Activated T-helper 2 cell treated with anti-CD3 and anti-CD28 coated beads, Interferon-gamma antibody, Interleukin-2, Interleukin-4, amounts not matched to agents 10 μg/mL and 5 μg/mL and 100 μg/mL, durations not matched to agents 14 hours and 24 hours and 36 hours (primary cell): ENCODE measurements at regions of chr22 and their contacts with region 1.

Region 1: GRCh38 chr22:46122511-46122971 is 27.8 kb upstream of the PPARA start:
- DNase-seq: peak; percentile 49
- H3K4me3 Mint-ChIP-seq: no peak overlapping the region
- H3K27ac Mint-ChIP-seq: no peak overlapping the region
- H3K4me1 Mint-ChIP-seq: no peaks in the 10 kb centered on the region
- H3K27me3 Mint-ChIP-seq: no peaks in the 10 kb centered on the region

Region 2: DNA sequence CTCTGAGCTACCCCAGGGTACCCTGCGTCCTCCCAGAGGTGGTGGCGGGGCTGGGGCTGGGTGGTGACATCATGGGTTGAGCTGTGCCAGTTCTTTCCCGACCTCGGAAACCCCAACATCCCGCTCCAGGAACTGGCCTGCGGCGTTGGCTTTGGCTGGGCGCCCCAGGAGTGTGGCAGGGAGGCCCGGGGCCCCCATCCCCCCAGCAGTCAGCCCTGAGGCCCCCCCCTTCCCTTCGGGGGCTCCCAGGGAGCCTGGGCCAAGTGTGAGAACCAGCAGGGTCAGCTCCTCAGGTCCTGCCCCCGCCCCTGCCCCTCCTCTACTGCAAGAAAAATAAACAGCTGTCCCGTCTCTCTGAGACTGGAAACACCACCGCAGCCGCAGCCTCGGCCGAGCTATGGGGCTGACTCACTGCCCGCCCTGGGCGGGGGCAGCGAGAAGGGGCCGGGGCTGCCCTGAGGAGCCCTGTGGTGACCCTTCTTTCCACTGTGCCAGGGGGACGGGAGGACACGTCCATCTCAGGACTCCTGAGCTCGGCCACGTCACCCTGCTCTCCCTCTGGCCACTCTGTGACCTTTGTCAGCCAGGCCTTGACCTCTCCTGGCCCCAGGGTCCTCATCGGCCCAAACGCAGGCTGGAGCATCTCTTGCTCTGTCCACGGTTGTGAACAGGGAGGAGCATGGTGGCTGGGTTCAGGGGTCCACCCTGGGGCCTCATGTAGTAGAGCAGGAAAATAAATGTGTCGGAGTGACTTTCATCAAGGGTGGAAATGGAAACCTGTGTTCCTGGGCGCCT is 219.0 kb before region 1 on chr22:
- intact Hi-C with region 1: no loop called
- DNase-seq: no peak
- H3K4me3 Mint-ChIP-seq: no peak overlapping the region
- H3K27ac Mint-ChIP-seq: no peak overlapping the region
- H3K4me1 Mint-ChIP-seq: no peaks in the 10 kb centered on the region
- H3K27me3 Mint-ChIP-seq: peaks cover 10% of the 10 kb centered on the region

Region 3: DNA sequence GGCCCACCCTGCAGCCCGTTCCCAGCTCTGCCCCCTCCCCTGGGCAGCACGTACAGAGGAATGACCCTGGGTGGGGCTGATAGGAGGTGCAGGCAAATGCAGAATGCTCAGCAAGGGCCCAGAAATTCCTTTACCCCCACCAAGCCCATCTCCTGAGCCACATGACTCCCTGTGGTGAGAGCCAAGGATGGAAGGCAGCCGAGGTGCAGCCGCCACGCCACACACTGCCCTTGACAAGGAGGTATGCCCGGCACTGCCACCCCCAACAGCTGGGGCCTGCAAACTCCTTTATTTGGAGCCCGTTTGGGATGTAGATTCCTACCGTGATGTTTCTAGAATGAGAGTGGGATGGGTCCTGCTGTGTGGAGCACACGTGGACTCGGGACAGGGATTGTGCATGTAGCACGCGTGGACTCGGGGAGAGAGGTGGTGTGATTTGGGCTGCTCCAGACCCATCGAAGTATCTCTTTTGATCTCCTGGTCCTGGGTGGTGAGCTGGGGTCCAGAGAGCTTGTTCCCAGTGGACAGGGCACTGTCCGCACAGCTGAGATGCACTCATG is 187.1 kb after region 1 on chr22:
- intact Hi-C with region 1: loop called (anchors 1 kb)
- DNase-seq: no peak
- H3K4me3 Mint-ChIP-seq: no peak overlapping the region
- H3K27ac Mint-ChIP-seq: no peak overlapping the region
- H3K4me1 Mint-ChIP-seq: peaks cover 11% of the 10 kb centered on the region
- H3K27me3 Mint-ChIP-seq: no peaks in the 10 kb centered on the region

Region 4: GRCh38 chr22:46542011-46542985 is 419.8 kb after region 1 on chr22:
- intact Hi-C with region 1: loop called (anchors 2 kb)
- DNase-seq: peak; percentile 56
- H3K4me3 Mint-ChIP-seq: no peak overlapping the region
- H3K27ac Mint-ChIP-seq: no peak overlapping the region
- H3K4me1 Mint-ChIP-seq: peaks cover 6% of the 10 kb centered on the region
- H3K27me3 Mint-ChIP-seq: peaks cover 25% of the 10 kb centered on the region